Posterior vena cava (tissue), 2 donors: ENCODE measurements at regions of chr10 and their contacts with region 1.

Region 1: GRCh38 chr10:127906548-127907377 is at the start of gene PTPRE:
- DNase-seq: peak; percentile 93
- total RNA-seq, gene PTPRE: 22.1 to 37.9 TPM

Region 2: DNA sequence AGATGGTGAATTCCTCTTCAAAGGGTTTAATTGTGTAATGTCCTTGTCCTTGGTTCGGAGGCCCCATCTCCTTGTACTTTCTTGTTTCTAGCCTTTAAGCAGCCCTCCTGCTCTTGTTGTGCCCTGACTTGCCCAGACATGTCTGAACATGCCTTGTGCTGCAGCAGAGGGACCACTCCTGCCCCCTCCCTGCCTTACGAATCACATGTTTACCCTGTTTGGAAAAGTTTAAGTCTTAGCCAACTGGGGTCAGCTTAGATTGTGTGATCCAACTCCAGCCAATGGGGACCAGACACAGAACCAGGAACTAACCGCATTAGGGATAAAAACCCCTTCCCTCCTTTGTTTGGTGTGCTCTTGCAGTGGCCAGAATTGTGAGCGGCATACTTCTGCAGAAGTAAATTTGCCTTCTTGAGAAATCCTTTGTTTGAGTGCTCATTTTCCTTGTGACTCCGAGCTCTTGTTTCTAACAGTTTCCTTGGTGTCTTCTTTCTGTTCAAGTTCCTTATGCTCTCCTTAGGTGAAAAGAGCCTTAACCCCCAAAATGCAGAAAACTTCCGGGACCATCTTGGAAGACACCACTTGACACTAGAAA is 43.4 kb before region 1 on chr10:
- intact Hi-C with region 1: loop called in 1 of 2 experiments (anchors 1 kb)
- DNase-seq: no peak

Region 3: DNA sequence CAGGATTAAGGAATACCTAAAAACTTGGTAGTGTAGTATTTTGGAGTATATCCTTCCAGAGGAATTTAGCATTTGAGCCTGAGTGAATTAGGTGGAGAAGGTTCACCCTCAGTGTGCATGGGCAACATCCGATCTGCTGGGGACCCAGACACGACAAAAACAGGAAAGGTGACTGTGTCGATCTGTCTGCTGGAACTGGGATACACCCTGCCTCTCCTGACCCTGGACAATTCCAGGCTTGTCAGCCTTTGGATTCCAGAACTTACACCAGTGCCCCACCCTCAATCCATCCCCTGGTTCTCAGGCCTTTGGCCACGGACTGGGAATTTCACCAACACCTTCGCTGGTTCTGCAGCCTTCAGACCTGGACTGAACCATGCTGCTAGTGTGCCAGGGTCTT is 42.0 kb after region 1 on chr10:
- intact Hi-C with region 1: no loop called
- DNase-seq: no peak

Region 4: DNA sequence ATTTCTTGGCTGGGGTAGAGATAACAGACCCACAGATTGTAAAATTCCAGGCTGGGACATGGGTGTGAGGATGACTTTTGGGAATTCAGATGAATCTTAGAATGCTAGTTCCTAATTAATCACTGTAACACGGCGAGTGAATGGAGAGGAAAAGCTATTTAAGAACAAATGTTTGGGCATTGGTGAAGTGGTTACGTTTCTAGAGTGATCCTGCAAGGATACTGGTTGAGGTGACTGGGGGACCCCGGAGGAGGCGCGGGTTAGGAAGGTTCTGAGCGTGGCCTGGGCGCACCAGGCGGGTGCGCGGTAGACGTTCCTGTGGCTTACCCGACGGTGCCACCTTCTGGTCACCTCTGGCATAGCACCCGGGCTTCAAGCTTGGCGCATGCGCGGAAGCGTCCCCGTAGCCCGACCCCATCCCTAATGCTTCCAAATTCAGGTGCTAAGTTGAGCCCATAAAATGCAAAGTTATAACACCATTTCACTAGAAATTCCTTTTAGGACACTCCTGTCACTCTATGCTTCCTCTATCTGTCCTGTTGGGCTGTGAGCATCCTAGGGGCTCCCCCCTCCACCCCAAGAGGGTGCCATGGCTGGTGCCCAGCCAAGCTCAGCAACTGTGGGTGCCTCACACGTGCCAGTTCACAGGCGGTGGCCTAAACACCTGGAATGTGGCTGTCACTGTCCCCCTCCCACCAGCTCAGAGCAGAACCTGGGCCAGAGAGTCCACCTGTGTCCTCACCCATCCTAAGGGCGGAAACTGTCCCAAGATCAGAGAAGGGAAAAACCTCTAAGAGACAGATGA is 104.6 kb after region 1 on chr10:
- intact Hi-C with region 1: loop called (anchors 2 kb)
- DNase-seq: peak; percentile 96

Region 5: GRCh38 chr10:128069351-128070051 is 162.7 kb after region 1 on chr10:
- intact Hi-C with region 1: loop called in 1 of 2 experiments (anchors 2 kb)
- DNase-seq: peak; percentile 92